ENCODE measurements at regions of chr10 and their contacts with region 1.

Region 1: GRCh38 chr10:67520924-67521520 is 175.0 kb downstream of the CTNNA3 start:
- DNase-seq: peak; percentile 60
- H3K4me3 Mint-ChIP-seq: no peak overlapping the region
- H3K27ac Mint-ChIP-seq: no peak overlapping the region
- H3K4me1 Mint-ChIP-seq: no peaks in the 10 kb centered on the region
- H3K27me3 Mint-ChIP-seq: peaks cover 10% of the 10 kb centered on the region
- CTCF ChIP-seq: peak; percentile 79

Region 2: DNA sequence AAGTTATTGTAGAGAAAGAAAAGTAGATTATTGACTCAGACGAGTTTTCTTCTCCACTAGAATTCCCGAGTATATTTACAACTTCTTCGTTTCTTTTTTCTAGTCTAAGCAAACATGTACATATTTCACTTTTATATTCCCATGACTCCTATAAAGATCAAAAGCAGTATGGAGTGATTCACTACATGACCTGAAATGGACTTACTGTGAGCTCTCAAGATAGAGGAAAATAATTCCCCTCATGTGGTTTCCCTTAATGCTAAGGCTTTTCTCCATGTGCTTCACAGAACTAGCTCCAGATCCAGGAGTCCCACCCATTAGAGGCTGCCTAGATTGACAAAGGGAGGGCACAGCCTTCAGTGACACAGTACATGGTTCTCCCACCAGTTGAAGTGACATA is 1418.3 kb before region 1 on chr10:
- CTCF ChIA-PET with region 1: no interaction called
- intact Hi-C with region 1: no loop called
- DNase-seq: no peak
- H3K4me3 Mint-ChIP-seq: no peak overlapping the region
- H3K27ac Mint-ChIP-seq: no peak overlapping the region
- H3K4me1 Mint-ChIP-seq: no peaks in the 10 kb centered on the region
- H3K27me3 Mint-ChIP-seq: no peaks in the 10 kb centered on the region
- CTCF ChIP-seq: no peak

Region 3: DNA sequence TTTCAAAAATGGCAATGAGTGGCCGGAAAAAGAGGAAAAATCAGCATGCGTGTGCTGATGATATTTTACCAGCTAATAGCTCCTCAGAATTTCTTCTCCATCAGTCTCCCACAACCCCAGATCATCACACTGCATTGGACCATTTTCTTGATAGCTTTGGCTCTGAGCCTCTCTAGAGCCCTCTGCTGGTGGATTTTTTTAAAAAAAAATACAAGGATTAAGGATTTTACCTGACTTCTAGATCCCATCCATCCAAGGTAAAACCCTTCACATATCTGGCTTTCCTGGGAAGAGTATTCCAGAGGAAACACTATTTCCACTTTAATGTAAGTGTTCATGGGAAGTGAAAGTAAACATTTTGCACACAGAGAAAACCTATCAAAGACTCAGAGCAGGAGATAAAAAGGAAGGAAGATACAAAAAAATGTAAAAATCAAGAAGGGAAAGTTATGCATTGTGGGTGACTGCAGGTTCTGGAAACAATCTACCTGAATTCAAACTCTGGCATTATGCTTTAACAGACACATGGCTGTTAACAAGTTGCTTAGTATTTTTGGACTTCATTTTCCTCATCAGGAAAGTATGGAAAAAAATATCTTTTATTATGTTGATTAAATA is 214.3 kb before region 1 on chr10:
- CTCF ChIA-PET with region 1: interaction called, 8 read pairs
- intact Hi-C with region 1: loop called (anchors 1 kb)
- DNase-seq: peak; percentile 5
- H3K4me3 Mint-ChIP-seq: no peak overlapping the region
- H3K27ac Mint-ChIP-seq: no peak overlapping the region
- H3K4me1 Mint-ChIP-seq: no peaks in the 10 kb centered on the region
- H3K27me3 Mint-ChIP-seq: peaks cover 13% of the 10 kb centered on the region
- CTCF ChIP-seq: peak; percentile 75

Region 4: DNA sequence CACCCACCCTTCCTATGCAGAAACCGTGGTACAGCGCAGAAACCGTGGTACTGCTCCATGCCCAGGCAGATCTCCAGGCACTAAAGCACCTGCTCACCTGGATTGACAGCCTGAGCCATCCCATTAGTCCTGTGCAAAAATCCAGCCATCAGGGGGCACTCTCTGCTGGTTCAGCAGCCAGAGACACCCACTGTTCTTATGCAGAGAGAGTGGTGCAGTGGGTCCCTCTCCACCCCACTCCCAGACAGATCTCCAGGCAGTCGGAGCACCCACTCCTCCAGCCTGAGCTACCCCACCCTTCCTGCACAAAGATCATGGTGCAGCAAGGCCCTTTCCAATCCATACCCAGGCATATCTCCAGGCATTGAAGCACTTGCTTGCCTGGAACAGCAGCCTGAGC is 44.8 kb before region 1 on chr10:
- CTCF ChIA-PET with region 1: interaction called, 3 read pairs
- intact Hi-C with region 1: loop called (anchors 1 kb)
- DNase-seq: peak; percentile 24
- H3K4me3 Mint-ChIP-seq: no peak overlapping the region
- H3K27ac Mint-ChIP-seq: no peak overlapping the region
- H3K4me1 Mint-ChIP-seq: no peaks in the 10 kb centered on the region
- H3K27me3 Mint-ChIP-seq: peaks cover 25% of the 10 kb centered on the region
- CTCF ChIP-seq: no peak

Measured in Calu3 (cell line).